ENCODE measurements at regions of chr11 and their contacts with region 1.

Region 1: GRCh38 chr11:129543515-129544290 is 168.1 kb downstream of the BARX2 start:
- DNase-seq: peak; percentile 98
- H3K4me3 ChIP-seq: peak overlapping the region; percentile 23
- H3K27ac ChIP-seq: peak overlapping the region; percentile 97
- H3K4me1 ChIP-seq: peaks cover 43% of the 10 kb centered on the region
- H3K27me3 ChIP-seq: no peaks in the 10 kb centered on the region
- CTCF ChIP-seq: no peak

Region 2: GRCh38 chr11:129364143-129364654 is 179.5 kb before region 1 on chr11:
- CTCF ChIA-PET with region 1: interaction called, 10 read pairs
- POLR2A ChIA-PET with region 1: no interaction called
- intact Hi-C with region 1: loop called (anchors 1 kb)
- DNase-seq: peak; percentile 97
- H3K4me3 ChIP-seq: peak overlapping the region; percentile 10
- H3K27ac ChIP-seq: no peak overlapping the region
- H3K4me1 ChIP-seq: peaks cover 39% of the 10 kb centered on the region
- H3K27me3 ChIP-seq: no peaks in the 10 kb centered on the region
- CTCF ChIP-seq: peak; percentile 100

Region 3: GRCh38 chr11:129595038-129595962 is 51.6 kb after region 1 on chr11:
- CTCF ChIA-PET with region 1: interaction called, 3 read pairs
- POLR2A ChIA-PET with region 1: no interaction called
- intact Hi-C with region 1: loop called (anchors 5 kb)
- DNase-seq: no peak
- H3K4me3 ChIP-seq: no peak overlapping the region
- H3K27ac ChIP-seq: no peak overlapping the region
- H3K4me1 ChIP-seq: peaks cover 68% of the 10 kb centered on the region
- H3K27me3 ChIP-seq: no peaks in the 10 kb centered on the region
- CTCF ChIP-seq: no peak

Region 4: DNA sequence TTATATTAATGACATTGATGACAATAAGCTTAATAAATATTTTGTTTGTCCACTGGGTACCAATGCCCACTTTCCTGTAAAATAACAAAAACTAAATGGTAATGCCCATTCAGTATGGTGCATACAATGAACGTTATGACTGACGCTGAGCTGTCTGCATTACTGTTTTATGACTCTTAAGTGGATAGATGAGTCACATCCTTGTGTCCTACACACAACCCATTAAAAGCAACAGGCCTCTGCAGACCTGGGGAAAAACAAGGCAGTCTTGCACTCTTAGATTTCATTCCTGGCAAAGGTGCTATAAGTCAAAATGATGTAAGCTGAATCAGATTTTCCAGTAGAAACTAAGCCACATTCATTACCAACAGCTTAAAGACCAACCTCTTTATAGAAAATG is 95.6 kb after region 1 on chr11:
- CTCF ChIA-PET with region 1: interaction called, 7 read pairs
- POLR2A ChIA-PET with region 1: no interaction called
- intact Hi-C with region 1: loop called (anchors 5 kb)
- DNase-seq: peak; percentile 94
- H3K4me3 ChIP-seq: no peak overlapping the region
- H3K27ac ChIP-seq: peak overlapping the region; percentile 58
- H3K4me1 ChIP-seq: peaks cover 33% of the 10 kb centered on the region
- H3K27me3 ChIP-seq: no peaks in the 10 kb centered on the region
- CTCF ChIP-seq: no peak

Measured in A673 (cell line).